Activated CD4-positive, alpha-beta T cell treated with anti-CD3 and anti-CD28 coated beads for 36 hours (primary cell): ENCODE measurements at regions of chr2 and their contacts with region 1.

Region 1: DNA sequence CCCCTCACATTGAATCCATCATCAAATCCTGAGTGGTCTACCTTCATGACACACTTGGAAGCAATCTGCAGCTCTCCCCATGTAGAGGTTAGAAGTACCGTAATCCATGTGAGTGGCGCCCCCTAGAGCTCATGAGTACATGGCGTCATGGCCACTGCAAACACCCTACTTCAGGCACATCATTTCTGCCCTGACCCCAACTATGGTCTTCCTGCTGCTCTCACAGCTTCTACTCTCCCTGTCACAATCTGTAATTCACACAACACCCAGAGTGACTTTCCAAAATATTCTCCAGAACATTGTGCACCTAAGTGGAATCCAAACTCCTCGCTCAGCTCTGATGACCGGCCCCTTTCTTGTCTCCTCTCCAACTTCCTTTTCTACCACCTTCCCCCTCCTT is 141.9 kb downstream of the ANKRD44 start:
- DNase-seq: peak; percentile 87
- ATAC-seq: peak; percentile 83
- H3K4me3 Mint-ChIP-seq: no peak overlapping the region
- H3K27ac Mint-ChIP-seq: peak overlapping the region; percentile 82
- H3K4me1 Mint-ChIP-seq: peaks cover 69% of the 10 kb centered on the region
- H3K27me3 Mint-ChIP-seq: no peaks in the 10 kb centered on the region

Region 2: GRCh38 chr2:197011799-197012641 is 156.7 kb before region 1 on chr2:
- CTCF ChIA-PET with region 1: interaction called, 3 read pairs
- POLR2A ChIA-PET with region 1: no interaction called
- intact Hi-C with region 1: loop called in 1 of 2 experiments (anchors 5 kb)
- DNase-seq: peak; percentile 36
- ATAC-seq: peak; percentile 74
- H3K4me3 Mint-ChIP-seq: no peak overlapping the region
- H3K27ac Mint-ChIP-seq: peak overlapping the region; percentile 80
- H3K4me1 Mint-ChIP-seq: no peaks in the 10 kb centered on the region
- H3K27me3 Mint-ChIP-seq: no peaks in the 10 kb centered on the region

Region 3: DNA sequence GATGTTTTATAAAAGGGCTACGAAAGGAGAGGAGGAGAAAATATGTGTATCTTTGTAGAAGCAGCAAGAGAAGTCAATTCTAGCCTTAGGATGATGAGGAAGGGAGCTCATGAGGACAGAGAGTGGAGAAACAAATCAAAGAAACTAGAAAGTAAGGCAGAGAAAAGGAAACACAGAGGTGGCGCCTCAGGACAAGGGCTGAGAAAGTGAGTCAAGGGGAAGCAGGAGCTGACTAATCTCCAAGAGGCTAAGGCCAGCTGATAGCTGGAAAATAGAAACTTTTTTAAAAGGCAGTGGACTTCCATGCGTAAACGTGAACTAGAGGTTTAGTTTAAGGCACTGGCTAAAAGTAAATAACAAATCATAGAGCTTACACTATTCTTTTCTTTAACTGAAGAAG is 31.5 kb before region 1 on chr2:
- CTCF ChIA-PET with region 1: interaction called, 14 read pairs
- POLR2A ChIA-PET with region 1: no interaction called
- intact Hi-C with region 1: no loop called
- DNase-seq: peak; percentile 46
- ATAC-seq: peak; percentile 62
- H3K4me3 Mint-ChIP-seq: no peak overlapping the region
- H3K27ac Mint-ChIP-seq: peak overlapping the region; percentile 76
- H3K4me1 Mint-ChIP-seq: peaks cover 87% of the 10 kb centered on the region
- H3K27me3 Mint-ChIP-seq: no peaks in the 10 kb centered on the region

Region 4: GRCh38 chr2:197152451-197153228 is 16.1 kb before region 1 on chr2:
- CTCF ChIA-PET with region 1: interaction called, 23 read pairs
- POLR2A ChIA-PET with region 1: no interaction called
- intact Hi-C with region 1: no loop called
- DNase-seq: no peak
- ATAC-seq: peak; percentile 63
- H3K4me3 Mint-ChIP-seq: peak overlapping the region; percentile 28
- H3K27ac Mint-ChIP-seq: peak overlapping the region; percentile 89
- H3K4me1 Mint-ChIP-seq: peaks cover 81% of the 10 kb centered on the region
- H3K27me3 Mint-ChIP-seq: no peaks in the 10 kb centered on the region

Region 5: DNA sequence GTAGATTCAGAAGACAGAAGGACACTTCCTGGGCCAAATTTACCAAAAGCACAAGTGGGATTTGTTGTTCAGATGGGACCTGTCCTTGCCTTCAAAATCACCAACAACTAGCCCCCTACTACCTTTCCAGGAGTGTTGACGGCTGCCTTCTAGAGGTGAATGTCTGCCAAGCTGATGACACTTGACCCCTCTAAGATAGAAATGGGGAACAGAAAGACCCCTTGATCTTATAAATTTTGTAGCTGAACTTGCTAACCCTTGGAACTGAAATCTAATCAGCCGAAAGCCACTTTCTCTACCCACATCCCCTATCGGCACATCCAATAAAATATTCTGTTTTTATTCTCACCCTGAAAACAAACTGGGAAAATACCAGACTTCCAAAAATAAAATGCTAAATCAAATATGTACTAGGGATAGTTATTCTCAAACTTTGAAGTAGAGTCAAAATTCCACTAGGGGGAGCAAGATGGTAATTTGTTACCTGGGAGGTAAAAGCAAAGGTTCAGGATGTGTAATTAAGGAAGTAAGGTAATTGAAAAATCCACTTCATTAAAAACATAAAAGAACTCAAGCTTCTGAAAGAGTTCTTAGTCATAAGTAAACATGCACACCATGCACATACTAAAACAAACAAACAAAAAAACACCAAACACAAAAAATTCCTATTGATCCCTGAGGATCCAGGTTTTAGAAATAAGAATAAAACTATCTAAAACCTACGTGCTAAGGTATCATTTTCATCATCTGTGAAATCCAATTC is 22.7 kb after region 1 on chr2:
- CTCF ChIA-PET with region 1: interaction called, 10 read pairs
- POLR2A ChIA-PET with region 1: no interaction called
- intact Hi-C with region 1: no loop called
- DNase-seq: no peak
- ATAC-seq: peak; percentile 54
- H3K4me3 Mint-ChIP-seq: peak overlapping the region; percentile 33
- H3K27ac Mint-ChIP-seq: peak overlapping the region; percentile 59
- H3K4me1 Mint-ChIP-seq: peaks cover 79% of the 10 kb centered on the region
- H3K27me3 Mint-ChIP-seq: no peaks in the 10 kb centered on the region